ENCODE measurements at regions of chr14 and their contacts with region 1.

Region 1: DNA sequence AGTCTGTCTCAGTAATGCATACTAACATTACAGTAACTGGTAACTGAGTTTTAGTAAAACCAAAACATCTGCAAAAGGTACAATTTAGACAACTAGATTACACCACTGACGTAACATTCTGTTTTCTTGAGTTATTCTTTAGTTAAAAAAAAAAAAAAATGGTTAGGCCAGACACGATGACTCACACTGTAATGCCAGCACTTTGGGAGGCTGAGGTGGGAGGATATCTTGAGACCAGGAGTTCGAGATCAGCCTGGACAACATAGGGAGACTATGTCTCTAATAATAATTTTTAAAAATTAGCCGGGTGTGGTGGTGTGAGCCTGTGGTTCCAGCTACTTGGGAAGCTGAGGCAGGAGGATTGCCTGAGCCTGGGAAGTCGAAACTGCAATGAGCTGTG is 34.1 kb downstream of the AP5M1 start:
- DNase-seq: no peak
- H3K4me3 ChIP-seq: no peak overlapping the region
- H3K27ac ChIP-seq: no peak overlapping the region
- H3K4me1 ChIP-seq: no peaks in the 10 kb centered on the region
- H3K27me3 ChIP-seq: no peaks in the 10 kb centered on the region
- CTCF ChIP-seq: no peak
- POLR2A ChIP-seq: no peak

Region 2: GRCh38 chr14:56491299-56492285 is 811.3 kb before region 1 on chr14:
- intact Hi-C with region 1: loop called (anchors 5 kb)
- DNase-seq: no peak
- H3K4me3 ChIP-seq: no peak overlapping the region
- H3K27ac ChIP-seq: no peak overlapping the region
- H3K4me1 ChIP-seq: peaks cover 6% of the 10 kb centered on the region
- H3K27me3 ChIP-seq: no peaks in the 10 kb centered on the region
- CTCF ChIP-seq: peak in 2 of 3 experiments; percentile 48 to 62
- POLR2A ChIP-seq: no peak

Measured in vagina (tissue), 2 donors.